GM12878 (cell line): ENCODE measurements at regions of chr12 and their contacts with region 1.

Region 1: DNA sequence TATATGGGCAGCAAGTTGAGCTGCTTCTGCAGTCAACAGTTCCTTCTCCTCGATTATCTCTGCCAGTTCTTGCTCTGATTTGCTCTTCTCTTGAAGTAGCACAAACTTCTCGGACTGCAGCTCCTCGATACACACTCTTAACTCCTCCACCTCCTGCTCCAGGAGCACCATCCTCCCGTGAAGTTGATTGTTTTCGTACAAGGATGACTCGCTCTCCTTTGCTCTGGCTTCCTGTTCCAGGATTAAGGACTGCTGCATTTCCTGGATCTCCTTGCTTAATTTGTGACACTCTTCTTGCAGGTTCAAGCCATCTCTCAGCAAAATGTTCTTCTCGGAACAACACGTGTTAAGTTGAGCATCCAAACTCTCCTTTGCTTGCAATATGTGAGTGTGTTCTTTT is 56.2 kb upstream of the VPS33A start:
- DNase-seq: no peak
- ATAC-seq: no peak
- H3K4me3 ChIP-seq: no peak overlapping the region
- H3K27ac ChIP-seq: no peak overlapping the region
- H3K4me1 ChIP-seq: no peaks in the 10 kb centered on the region
- H3K27me3 ChIP-seq: no peaks in the 10 kb centered on the region
- CTCF ChIP-seq: no peak
- EP300 ChIP-seq: no peak
- POLR2A ChIP-seq: no peak
- RAD21 ChIP-seq: no peak

Region 2: GRCh38 chr12:122336015-122336946 is 13.8 kb after region 1 on chr12:
- CTCF ChIA-PET with region 1: interaction called, 12 read pairs
- POLR2A ChIA-PET with region 1: interaction called, 3 read pairs
- RAD21 ChIA-PET with region 1: no interaction called
- SMC1A ChIA-PET with region 1: interaction called, 6 read pairs
- in situ Hi-C with region 1: no loop called
- intact Hi-C with region 1: no loop called
- DNase-seq: no peak
- ATAC-seq: peak; percentile 79
- H3K4me3 ChIP-seq: peak overlapping the region; percentile 62; the same call in 1 of the 2 replicates
- H3K27ac ChIP-seq: peak overlapping the region; percentile 34; the same call in 1 of the 2 replicates
- H3K4me1 ChIP-seq: no peaks in the 10 kb centered on the region
- H3K27me3 ChIP-seq: no peaks in the 10 kb centered on the region
- CTCF ChIP-seq: peak; percentile 68 to 74 (median 73)
- EP300 ChIP-seq: no peak
- POLR2A ChIP-seq: no peak
- RAD21 ChIP-seq: peak; percentile 68

Region 3: GRCh38 chr12:122356192-122356635 is 33.7 kb after region 1 on chr12:
- CTCF ChIA-PET with region 1: interaction called, 17 read pairs
- POLR2A ChIA-PET with region 1: no interaction called
- RAD21 ChIA-PET with region 1: no interaction called
- SMC1A ChIA-PET with region 1: interaction called, 4 read pairs
- in situ Hi-C with region 1: no loop called
- intact Hi-C with region 1: no loop called
- DNase-seq: peak; percentile 19
- ATAC-seq: peak; percentile 96
- H3K4me3 ChIP-seq: no peak overlapping the region
- H3K27ac ChIP-seq: no peak overlapping the region
- H3K4me1 ChIP-seq: no peaks in the 10 kb centered on the region
- H3K27me3 ChIP-seq: no peaks in the 10 kb centered on the region
- CTCF ChIP-seq: peak; percentile 72 to 81 (median 74)
- EP300 ChIP-seq: no peak
- POLR2A ChIP-seq: no peak
- RAD21 ChIP-seq: peak; percentile 61

Region 4: DNA sequence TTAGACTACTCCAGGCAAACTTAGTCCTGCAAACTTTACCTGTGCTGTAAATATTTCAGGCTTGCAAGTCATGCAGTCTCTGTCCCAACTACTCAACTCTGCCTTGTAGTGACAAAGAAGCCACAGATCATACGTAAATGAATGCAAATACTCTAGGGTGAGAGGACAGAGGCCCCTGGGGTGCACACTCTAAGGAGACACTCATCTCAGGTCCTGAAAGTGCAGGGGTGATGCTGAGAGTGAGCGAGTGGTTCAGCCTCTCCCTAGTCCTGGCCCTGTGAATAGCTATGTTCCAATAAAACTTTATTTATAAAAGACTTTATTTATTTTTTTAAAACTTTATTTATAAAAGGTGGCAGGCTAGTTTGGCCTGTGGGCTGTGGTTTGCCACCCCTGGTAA is 345.8 kb after region 1 on chr12:
- CTCF ChIA-PET with region 1: no interaction called
- POLR2A ChIA-PET with region 1: no interaction called
- RAD21 ChIA-PET with region 1: no interaction called
- SMC1A ChIA-PET with region 1: no interaction called
- in situ Hi-C with region 1: no loop called
- intact Hi-C with region 1: no loop called
- DNase-seq: no peak
- ATAC-seq: peak; percentile 67
- H3K4me3 ChIP-seq: no peak overlapping the region
- H3K27ac ChIP-seq: no peak overlapping the region
- H3K4me1 ChIP-seq: no peaks in the 10 kb centered on the region
- H3K27me3 ChIP-seq: no peaks in the 10 kb centered on the region
- CTCF ChIP-seq: no peak
- EP300 ChIP-seq: no peak
- POLR2A ChIP-seq: no peak
- RAD21 ChIP-seq: no peak